ENCODE measurements at regions of chr1 and their contacts with region 1.

Region 1: DNA sequence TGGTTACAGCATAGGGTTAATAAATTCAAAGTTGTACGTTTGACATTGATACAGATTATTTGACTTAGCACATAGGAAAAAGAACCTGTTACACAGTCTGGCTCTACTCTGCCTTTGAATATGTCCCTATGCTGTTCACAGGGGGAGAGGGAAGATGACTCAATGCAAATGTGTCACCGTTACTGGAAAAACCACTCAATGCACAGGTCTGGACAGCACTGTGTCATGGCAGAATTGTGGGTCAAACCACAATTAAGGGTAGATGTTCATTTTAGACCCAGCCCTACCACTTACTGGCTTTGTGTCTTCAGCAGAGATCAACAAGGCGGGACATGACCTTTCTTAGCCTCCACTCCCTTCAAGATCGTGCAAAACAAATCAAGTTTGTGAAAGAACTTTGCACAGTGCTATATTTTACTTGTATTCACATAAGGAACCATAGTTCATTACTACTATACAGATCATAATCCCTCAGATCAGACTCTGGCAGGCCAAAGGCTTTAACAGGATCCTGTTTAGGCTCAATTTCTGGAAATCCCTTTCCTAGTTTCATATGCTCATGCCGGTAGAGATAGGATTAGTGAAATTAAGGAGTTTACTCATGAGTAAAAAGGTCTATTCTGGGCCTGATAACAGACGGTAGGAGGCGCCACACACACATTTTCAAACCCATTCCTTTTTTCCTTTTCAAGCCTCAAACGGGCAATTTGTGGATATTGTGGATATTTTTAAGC is 22.1 kb downstream of the EIF2D start:
- DNase-seq: peak; percentile 80
- H3K4me3 Mint-ChIP-seq: peak overlapping the region; percentile 55
- H3K27ac Mint-ChIP-seq: peak overlapping the region; percentile 98
- H3K4me1 Mint-ChIP-seq: peaks cover 68% of the 10 kb centered on the region
- H3K27me3 Mint-ChIP-seq: no peaks in the 10 kb centered on the region

Region 2: GRCh38 chr1:206556750-206557635 is 33.2 kb before region 1 on chr1:
- CTCF ChIA-PET with region 1: interaction called, 524 read pairs
- POLR2A ChIA-PET with region 1: interaction called, 1,193 read pairs
- DNase-seq: peak; percentile 94
- H3K4me3 Mint-ChIP-seq: peak overlapping the region; percentile 92
- H3K27ac Mint-ChIP-seq: peak overlapping the region; percentile 94
- H3K4me1 Mint-ChIP-seq: peaks cover 68% of the 10 kb centered on the region
- H3K27me3 Mint-ChIP-seq: no peaks in the 10 kb centered on the region

Region 3: GRCh38 chr1:206575165-206575893 is 14.9 kb before region 1 on chr1:
- CTCF ChIA-PET with region 1: interaction called, 524 read pairs
- POLR2A ChIA-PET with region 1: interaction called, 1,193 read pairs
- DNase-seq: peak; percentile 72
- H3K4me3 Mint-ChIP-seq: peak overlapping the region; percentile 56
- H3K27ac Mint-ChIP-seq: peak overlapping the region; percentile 90
- H3K4me1 Mint-ChIP-seq: peaks cover 99% of the 10 kb centered on the region
- H3K27me3 Mint-ChIP-seq: no peaks in the 10 kb centered on the region

Region 4: DNA sequence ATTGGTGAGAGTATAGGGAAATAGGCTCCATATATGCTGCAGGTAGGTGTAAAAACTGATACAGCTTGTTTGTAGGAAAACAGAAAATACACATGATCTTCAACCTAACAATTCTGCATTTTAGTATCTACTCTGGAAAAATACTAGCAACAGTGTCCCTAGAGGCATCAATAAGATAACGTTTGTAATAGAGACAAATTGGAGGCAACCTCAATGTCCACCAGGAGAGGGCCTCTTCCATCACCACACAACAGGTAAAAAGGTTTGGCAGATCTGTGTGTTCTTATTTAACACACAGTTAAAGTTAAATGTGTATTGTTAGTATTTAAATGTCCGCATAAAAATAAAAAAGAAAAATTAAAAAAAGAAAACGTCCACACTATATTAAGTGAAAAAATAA is 16.7 kb after region 1 on chr1:
- CTCF ChIA-PET with region 1: interaction called, 13 read pairs
- POLR2A ChIA-PET with region 1: interaction called, 4 read pairs
- DNase-seq: no peak
- H3K4me3 Mint-ChIP-seq: no peak overlapping the region
- H3K27ac Mint-ChIP-seq: peak overlapping the region; percentile 32
- H3K4me1 Mint-ChIP-seq: peaks cover 39% of the 10 kb centered on the region
- H3K27me3 Mint-ChIP-seq: no peaks in the 10 kb centered on the region

Region 5: DNA sequence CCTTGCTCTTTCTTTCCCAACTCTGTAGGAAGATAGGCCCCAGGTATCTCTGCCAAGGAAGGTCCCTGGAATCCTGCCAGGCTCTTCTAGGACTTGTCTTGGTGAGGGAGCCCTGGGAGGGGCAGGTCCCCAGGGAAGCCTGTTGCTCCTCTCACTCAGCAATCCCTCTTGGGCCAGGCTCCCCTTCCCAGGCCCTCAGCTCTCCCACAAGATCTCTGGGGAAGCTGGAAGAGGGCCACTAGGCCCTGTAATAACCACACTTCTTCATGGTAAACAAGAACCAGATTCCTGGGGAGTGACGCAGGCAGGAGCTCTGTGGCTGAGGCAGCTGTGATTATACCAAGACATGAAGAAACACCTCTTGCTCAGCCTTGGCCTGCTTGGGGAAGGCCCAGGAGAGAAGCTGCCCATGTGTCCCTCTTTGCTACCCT is 84.6 kb after region 1 on chr1:
- CTCF ChIA-PET with region 1: no interaction called
- POLR2A ChIA-PET with region 1: no interaction called
- DNase-seq: no peak
- H3K4me3 Mint-ChIP-seq: no peak overlapping the region
- H3K27ac Mint-ChIP-seq: no peak overlapping the region
- H3K4me1 Mint-ChIP-seq: peaks cover 14% of the 10 kb centered on the region
- H3K27me3 Mint-ChIP-seq: peaks cover 6% of the 10 kb centered on the region